H1 (cell line): ENCODE measurements at regions of chr9 and their contacts with region 1.

Region 1: DNA sequence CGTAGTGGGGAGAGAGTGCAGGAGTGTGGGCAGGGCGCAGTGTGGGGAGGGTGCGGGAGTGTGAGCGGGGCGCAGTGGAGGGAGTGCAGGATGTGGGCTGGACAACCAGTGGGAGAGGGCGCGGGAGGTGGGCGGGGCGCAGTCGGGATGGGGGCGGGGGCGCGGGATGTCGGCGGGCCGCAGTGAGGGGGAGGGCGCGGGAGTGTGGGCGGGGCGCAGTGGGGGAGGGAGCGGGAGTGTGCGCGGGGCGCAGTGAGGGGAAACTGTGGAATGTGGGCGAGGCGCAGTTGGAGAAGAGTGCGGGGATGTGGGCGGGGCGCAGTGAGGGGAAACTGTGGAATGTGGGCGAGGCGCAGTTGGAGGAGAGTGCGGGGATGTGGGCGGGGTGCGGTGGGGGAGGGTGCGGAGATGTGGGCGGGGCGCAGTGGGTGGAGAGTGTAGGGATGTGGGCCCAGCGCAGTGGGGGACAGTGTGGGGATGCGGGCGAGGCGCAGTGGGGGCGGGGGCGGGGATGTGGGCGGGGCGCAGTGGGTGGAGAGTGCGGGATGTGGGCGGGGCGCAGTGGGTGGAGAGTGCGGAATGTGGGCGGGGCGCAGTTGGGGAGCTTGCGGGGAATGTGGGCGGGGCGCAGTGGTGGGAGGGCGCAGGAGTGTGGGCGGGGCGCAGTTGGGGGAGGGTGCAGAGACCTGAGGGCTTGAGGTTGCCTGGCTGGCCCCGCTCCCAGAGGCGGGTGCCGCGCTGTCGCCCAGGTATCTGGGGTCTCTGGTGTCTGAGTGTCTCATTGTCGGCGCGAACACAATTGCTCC is at the start of gene NXNL2:
- DNase-seq: peak in 1 of 2 experiments; percentile 96
- H3K4me3 ChIP-seq: peak within 1 kb of the TSS; percentile 55 to 91 (median 62)
- H3K27ac ChIP-seq: no peak within 1 kb of the TSS
- H3K4me1 ChIP-seq: peaks cover 0 to 5% (median 4%) of the 10 kb centered on the region in 4 experiments; a peak in 5 of 7 replicates
- H3K27me3 ChIP-seq: peaks cover 0 to 15% (median 12%) of the 10 kb centered on the region in 4 experiments; a peak in 4 of 7 replicates
- CTCF ChIP-seq: no peak
- EP300 ChIP-seq: no peak
- POLR2A ChIP-seq: peak in 1 of 2 experiments; percentile 32; a peak in 1 of 3 replicates
- RAD21 ChIP-seq: no peak
- total RNA-seq, gene NXNL2: 1.9 and 2.1 TPM in 2 replicates

Region 2: DNA sequence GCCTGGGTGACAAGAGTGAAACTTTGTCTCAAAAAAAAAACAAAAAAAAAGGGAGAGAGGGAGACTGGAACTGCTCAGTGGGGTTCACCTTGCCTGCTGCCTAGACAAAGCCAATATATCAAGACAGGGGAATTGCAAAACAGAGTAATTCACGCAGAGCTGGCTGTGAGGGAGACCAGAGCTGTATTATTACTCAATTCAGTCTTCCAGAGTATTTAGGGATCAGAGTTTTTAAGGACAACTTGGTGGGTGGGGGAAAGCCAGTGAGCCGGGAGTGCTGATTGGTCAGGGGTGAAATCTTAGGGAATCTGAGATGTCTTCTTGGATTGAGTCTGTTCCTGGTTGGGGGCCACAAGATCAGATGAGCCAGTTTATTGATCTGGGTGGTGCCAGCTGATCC is 172.0 kb before region 1 on chr9:
- CTCF ChIA-PET with region 1: no interaction called
- POLR2A ChIA-PET with region 1: no interaction called
- DNase-seq: no peak
- H3K4me3 ChIP-seq: no peak overlapping the region
- H3K27ac ChIP-seq: no peak overlapping the region
- H3K4me1 ChIP-seq: peaks cover 0 to 3% (median 0%) of the 10 kb centered on the region in 4 experiments; a peak in 2 of 7 replicates
- H3K27me3 ChIP-seq: no peaks in the 10 kb centered on the region
- CTCF ChIP-seq: no peak
- EP300 ChIP-seq: no peak
- POLR2A ChIP-seq: no peak
- RAD21 ChIP-seq: no peak

Region 3: GRCh38 chr9:88494983-88495721 is 39.5 kb before region 1 on chr9:
- CTCF ChIA-PET with region 1: interaction called, 11 read pairs
- POLR2A ChIA-PET with region 1: interaction called, 3 read pairs
- DNase-seq: no peak
- H3K4me3 ChIP-seq: no peak overlapping the region
- H3K27ac ChIP-seq: no peak overlapping the region
- H3K4me1 ChIP-seq: peaks cover 0 to 2% (median 0%) of the 10 kb centered on the region in 4 experiments; a peak in 2 of 7 replicates
- H3K27me3 ChIP-seq: no peaks in the 10 kb centered on the region
- CTCF ChIP-seq: no peak
- EP300 ChIP-seq: no peak
- POLR2A ChIP-seq: no peak
- RAD21 ChIP-seq: no peak

Region 4: DNA sequence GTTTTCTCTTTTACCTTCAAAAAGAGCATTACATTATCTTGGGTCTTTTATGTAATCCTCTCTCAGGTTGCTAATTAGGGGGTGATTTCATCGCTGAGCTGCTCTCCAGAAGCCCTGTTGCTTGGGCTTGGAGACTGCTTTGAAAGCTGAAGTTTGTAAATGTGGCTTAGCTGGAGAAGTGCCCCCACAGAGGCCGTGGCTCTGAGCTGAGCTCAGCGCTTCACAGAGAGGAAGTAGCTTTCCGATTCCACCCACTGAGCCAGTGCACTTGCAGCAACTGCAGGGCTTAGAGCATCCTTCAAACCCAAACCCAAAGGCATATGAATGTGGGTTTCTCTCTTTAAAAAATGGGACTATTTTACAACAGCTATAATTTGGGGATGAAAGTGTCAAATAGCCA is 13.4 kb before region 1 on chr9:
- CTCF ChIA-PET with region 1: interaction called, 18 read pairs
- POLR2A ChIA-PET with region 1: interaction called, 21 read pairs
- DNase-seq: no peak
- H3K4me3 ChIP-seq: no peak overlapping the region
- H3K27ac ChIP-seq: no peak overlapping the region
- H3K4me1 ChIP-seq: peaks cover 0 to 9% (median 5%) of the 10 kb centered on the region in 4 experiments; a peak in 5 of 7 replicates
- H3K27me3 ChIP-seq: no peaks in the 10 kb centered on the region
- CTCF ChIP-seq: no peak
- EP300 ChIP-seq: no peak
- POLR2A ChIP-seq: no peak
- RAD21 ChIP-seq: no peak

Region 5: GRCh38 chr9:88645172-88645878 is 110.7 kb after region 1 on chr9:
- CTCF ChIA-PET with region 1: no interaction called
- POLR2A ChIA-PET with region 1: no interaction called
- DNase-seq: no peak
- H3K4me3 ChIP-seq: no peak overlapping the region
- H3K27ac ChIP-seq: no peak overlapping the region
- H3K4me1 ChIP-seq: no peaks in the 10 kb centered on the region
- H3K27me3 ChIP-seq: no peaks in the 10 kb centered on the region
- CTCF ChIP-seq: no peak
- EP300 ChIP-seq: no peak
- POLR2A ChIP-seq: no peak
- RAD21 ChIP-seq: no peak

Region 6: GRCh38 chr9:88922031-88922430 is 387.4 kb after region 1 on chr9:
- CTCF ChIA-PET with region 1: no interaction called
- POLR2A ChIA-PET with region 1: no interaction called
- DNase-seq: no peak
- H3K4me3 ChIP-seq: no peak overlapping the region
- H3K27ac ChIP-seq: no peak overlapping the region
- H3K4me1 ChIP-seq: no peaks in the 10 kb centered on the region
- H3K27me3 ChIP-seq: no peaks in the 10 kb centered on the region
- CTCF ChIP-seq: no peak
- EP300 ChIP-seq: no peak
- POLR2A ChIP-seq: no peak
- RAD21 ChIP-seq: no peak